ENCODE measurements at regions of chr12 and their contacts with region 1.

Region 1: GRCh38 chr12:111396726-111397445 is 8.8 kb upstream of the SH2B3 start:
- DNase-seq: peak; percentile 92
- ATAC-seq: peak; percentile 74
- H3K4me3 Mint-ChIP-seq: peak overlapping the region; percentile 83
- H3K27ac Mint-ChIP-seq: peak overlapping the region; percentile 80
- H3K4me1 Mint-ChIP-seq: peaks cover 37% of the 10 kb centered on the region
- H3K27me3 Mint-ChIP-seq: no peaks in the 10 kb centered on the region
- CTCF ChIP-seq: peak; percentile 89

Region 2: DNA sequence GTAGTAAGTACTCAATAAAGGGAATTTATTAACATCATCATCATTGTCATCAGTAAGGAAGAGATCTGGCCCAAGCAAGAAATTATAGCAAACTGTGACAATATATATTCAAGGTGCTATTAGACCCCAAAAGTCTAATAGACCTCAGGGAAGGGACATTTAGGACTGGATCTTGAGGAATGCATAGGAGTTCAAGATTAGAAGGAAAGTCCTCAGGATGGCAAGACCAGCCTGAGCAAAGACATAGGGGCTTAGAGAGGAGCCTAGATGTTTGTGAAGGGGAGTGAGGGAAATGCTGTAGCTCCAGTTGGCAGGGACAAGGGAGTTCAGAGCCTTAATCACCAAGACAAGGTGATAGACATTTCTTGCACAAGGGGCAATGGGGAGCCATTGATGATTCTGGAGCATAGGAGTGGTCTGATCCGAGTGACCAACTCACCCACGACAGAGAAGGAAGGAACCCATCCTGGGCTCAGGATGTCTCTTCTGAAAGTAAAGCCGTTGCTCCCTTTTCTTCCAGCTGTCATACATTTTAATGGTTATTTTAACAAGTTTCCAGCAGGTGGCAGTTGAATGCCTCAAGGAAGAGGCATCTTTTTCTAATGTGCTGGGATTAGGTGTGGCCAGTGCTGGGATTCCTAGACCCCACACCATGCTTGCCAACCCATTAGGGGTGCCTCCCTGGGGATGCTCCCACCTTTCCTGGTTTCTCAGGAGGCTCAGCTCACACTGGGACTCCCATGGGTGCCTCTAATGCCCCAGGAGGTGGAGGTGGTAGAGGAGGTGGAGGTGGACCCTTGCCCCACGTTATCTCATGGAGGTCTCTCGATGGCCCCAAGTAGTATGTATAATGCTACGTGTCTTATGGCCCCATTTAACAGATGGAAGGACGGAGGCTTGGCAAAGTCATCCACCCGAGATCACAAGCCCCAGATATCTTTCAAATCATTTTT is 65.8 kb before region 1 on chr12:
- CTCF ChIA-PET with region 1: interaction called, 16 read pairs
- POLR2A ChIA-PET with region 1: no interaction called
- intact Hi-C with region 1: loop called (anchors 1 kb)
- DNase-seq: no peak
- ATAC-seq: no peak
- H3K4me3 Mint-ChIP-seq: no peak overlapping the region
- H3K27ac Mint-ChIP-seq: no peak overlapping the region
- H3K4me1 Mint-ChIP-seq: no peaks in the 10 kb centered on the region
- H3K27me3 Mint-ChIP-seq: peaks cover 3% of the 10 kb centered on the region
- CTCF ChIP-seq: no peak

Region 3: DNA sequence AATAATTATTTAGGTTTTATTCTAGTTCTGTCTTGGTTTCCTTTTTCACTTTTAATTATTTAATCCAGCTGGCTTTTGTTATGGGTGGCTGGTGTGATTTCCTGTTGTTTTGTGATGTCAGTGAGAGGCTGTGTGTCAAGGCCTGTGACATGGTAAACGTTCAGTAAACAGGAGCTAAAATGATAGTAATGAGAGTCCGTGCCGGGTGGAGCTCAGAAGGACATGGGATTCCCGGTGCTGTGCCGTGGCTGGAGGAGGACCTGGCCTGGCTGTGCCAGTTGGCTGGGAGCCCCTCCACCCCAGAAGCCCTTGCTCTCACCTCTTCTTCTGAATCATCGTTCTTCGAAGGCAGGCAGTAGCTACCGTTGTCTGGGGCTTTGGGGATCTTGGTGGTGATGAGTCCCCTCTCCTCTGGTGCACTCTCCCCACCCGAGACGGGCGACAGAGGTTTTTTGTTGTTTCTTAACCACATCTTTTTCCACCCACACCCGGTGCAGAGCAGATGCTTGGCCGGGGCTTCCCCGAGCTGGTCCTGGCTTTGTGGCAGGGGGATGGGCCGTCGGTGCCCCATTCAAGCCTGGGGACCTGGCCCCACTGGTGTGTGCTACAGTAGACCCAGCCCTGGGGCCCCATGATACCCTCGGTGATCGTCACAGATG is 37.9 kb after region 1 on chr12:
- CTCF ChIA-PET with region 1: interaction called, 13 read pairs
- POLR2A ChIA-PET with region 1: interaction called, 8 read pairs
- intact Hi-C with region 1: no loop called
- DNase-seq: peak; percentile 75
- ATAC-seq: peak; percentile 80
- H3K4me3 Mint-ChIP-seq: peak overlapping the region; percentile 83
- H3K27ac Mint-ChIP-seq: peak overlapping the region; percentile 92
- H3K4me1 Mint-ChIP-seq: peaks cover 95% of the 10 kb centered on the region
- H3K27me3 Mint-ChIP-seq: no peaks in the 10 kb centered on the region
- CTCF ChIP-seq: no peak

Region 4: DNA sequence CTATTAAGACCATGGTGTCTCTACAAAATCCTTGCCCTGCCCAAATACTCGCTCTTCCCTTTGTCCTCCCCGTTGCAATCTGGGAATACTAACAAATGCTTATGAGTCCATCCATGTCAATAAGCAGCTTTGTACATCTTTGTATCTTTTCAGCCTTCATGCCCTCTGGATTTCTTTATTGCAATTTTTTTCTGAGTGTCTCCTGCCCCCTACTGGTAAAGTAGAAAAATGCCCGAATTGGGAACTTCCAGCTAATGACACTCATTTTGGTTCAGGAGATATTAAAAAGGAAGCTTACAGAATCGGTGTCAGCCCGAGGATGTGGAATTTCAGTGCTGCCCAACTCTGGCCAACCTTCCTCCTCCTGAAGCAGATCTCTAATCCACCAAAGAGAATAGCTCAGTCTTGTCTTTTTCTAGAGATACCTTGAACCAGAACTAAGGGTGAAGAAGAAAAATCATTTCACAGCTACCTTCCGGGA is 54.8 kb after region 1 on chr12:
- CTCF ChIA-PET with region 1: interaction called, 522 read pairs
- POLR2A ChIA-PET with region 1: interaction called, 122 read pairs
- intact Hi-C with region 1: loop called (anchors 1 kb)
- DNase-seq: no peak
- ATAC-seq: peak; percentile 62
- H3K4me3 Mint-ChIP-seq: no peak overlapping the region
- H3K27ac Mint-ChIP-seq: no peak overlapping the region
- H3K4me1 Mint-ChIP-seq: peaks cover 28% of the 10 kb centered on the region
- H3K27me3 Mint-ChIP-seq: no peaks in the 10 kb centered on the region
- CTCF ChIP-seq: peak; percentile 24

Region 5: DNA sequence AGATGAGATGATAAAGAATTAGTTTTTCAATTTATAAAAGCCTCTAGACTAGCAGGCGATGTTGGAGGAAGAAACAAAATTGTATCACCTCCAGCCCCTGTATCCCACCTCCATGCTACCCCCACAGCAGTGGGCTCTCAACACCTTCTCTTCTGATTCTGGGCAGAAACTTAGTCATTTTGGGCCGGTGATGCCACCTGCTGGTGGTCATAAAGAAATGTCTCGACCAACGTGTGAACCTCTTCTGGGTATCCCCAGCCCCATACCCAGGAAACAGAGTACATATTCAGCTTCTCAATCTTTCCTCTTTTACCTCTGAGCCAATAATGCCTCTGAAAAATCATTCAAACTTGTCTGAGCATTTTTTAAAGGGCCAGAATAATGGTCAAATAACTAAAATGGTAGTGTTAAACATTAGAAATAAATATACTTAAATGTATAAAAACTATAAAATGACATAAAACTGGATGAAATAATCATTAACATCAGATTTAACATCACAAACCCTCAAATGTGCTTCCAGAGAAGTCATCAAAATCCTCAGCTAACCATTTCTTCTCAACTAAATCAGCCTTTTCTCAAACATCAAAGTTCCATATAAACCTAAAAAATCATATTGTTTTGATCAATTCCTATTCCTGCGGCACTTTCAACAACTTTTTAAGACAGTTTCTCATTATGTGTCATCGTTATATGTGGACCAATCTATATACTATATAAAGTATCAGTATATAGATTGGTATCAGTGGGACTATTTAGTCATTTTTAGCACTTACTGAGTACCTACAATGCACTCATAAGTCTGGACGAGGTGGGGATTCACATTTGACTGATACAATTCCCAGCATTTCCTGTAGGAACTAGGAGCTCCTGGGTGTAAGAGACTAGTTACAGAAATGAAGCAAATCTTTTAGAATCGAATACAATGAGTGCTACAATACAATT is 132.8 kb after region 1 on chr12:
- CTCF ChIA-PET with region 1: interaction called, 99 read pairs
- POLR2A ChIA-PET with region 1: interaction called, 3 read pairs
- intact Hi-C with region 1: no loop called
- DNase-seq: peak; percentile 41
- ATAC-seq: peak; percentile 86
- H3K4me3 Mint-ChIP-seq: no peak overlapping the region
- H3K27ac Mint-ChIP-seq: no peak overlapping the region
- H3K4me1 Mint-ChIP-seq: no peaks in the 10 kb centered on the region
- H3K27me3 Mint-ChIP-seq: no peaks in the 10 kb centered on the region
- CTCF ChIP-seq: no peak

Measured in activated B cell treated with CpG ODN at 0.5 μM for 24 hours (primary cell).